ENCODE measurements at regions of chr13 and their contacts with region 1.

Region 1: GRCh38 chr13:31044377-31045285 is 112.2 kb downstream of the TEX26 start:
- DNase-seq: peak; percentile 70 to 73
- ATAC-seq: peak; percentile 73 to 92 (median 88)
- H3K4me3 ChIP-seq: no peak overlapping the region
- H3K27ac ChIP-seq: peak overlapping the region in 1 of 10 donors; percentile 79
- H3K4me1 ChIP-seq: peaks cover 3 to 34% (median 19%) of the 10 kb centered on the region in 9 donors
- H3K27me3 ChIP-seq: peaks cover 0 to 11% (median 0%) of the 10 kb centered on the region in 7 donors
- CTCF ChIP-seq: peak; percentile 88 to 98 (median 94)

Region 2: GRCh38 chr13:30673669-30674521 is 370.7 kb before region 1 on chr13:
- intact Hi-C with region 1: loop called in 3 of 10 experiments (anchors 1 to 10 kb)
- DNase-seq: peak; percentile 86 to 90
- ATAC-seq: peak; percentile 93 to 97 (median 96)
- H3K4me3 ChIP-seq: peak overlapping the region in 9 of 10 donors; percentile 33 to 67 (median 59)
- H3K27ac ChIP-seq: peak overlapping the region; percentile 49 to 84 (median 76)
- H3K4me1 ChIP-seq: peaks cover 0 to 11% (median 7%) of the 10 kb centered on the region in 9 donors
- H3K27me3 ChIP-seq: no peaks in the 10 kb centered on the region
- CTCF ChIP-seq: peak; percentile 63 to 93 (median 81)

Region 3: DNA sequence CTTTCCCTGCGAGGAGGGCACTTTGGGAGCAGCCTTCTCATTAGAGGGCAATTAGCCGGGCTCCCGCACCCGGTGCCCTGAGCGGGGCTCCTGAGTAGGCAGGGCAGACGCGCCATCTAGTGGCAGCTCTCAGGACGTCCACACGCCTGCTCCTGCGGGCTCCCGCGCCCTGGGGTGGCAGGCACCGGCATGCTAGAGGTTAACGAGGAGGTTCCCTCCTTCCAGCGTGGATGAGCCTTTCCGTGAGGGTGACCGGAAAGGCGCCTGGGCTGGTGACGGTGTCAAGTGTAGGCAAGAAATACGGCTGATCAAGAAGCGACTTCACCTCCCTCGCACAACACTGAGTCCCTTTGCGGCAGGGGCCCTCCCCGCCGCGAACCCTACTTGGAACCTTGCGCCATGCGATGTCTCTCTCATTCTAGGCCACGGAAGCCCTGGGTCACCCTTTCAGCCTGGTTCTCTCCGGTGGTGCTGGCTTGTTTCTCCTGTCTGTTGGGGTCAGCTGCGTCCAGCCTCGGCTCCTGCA is 241.6 kb before region 1 on chr13:
- intact Hi-C with region 1: loop called in 4 of 10 experiments (anchors 2 to 10 kb)
- DNase-seq: peak; percentile 82 to 88
- ATAC-seq: peak; percentile 95 to 98 (median 96)
- H3K4me3 ChIP-seq: peak overlapping the region in 9 of 10 donors; percentile 26 to 57 (median 50)
- H3K27ac ChIP-seq: peak overlapping the region in 5 of 10 donors; percentile 10 to 61 (median 40)
- H3K4me1 ChIP-seq: peaks cover 0 to 28% (median 23%) of the 10 kb centered on the region in 9 donors
- H3K27me3 ChIP-seq: no peaks in the 10 kb centered on the region
- CTCF ChIP-seq: peak; percentile 86 to 99 (median 97)

Region 4: GRCh38 chr13:30892966-30893365 is 151.7 kb before region 1 on chr13:
- intact Hi-C with region 1: loop called in 1 of 10 experiments (anchors 10 kb)
- DNase-seq: peak in 1 of 2 donors; percentile 57
- ATAC-seq: peak in 6 of 8 donors; percentile 20 to 86 (median 36)
- H3K4me3 ChIP-seq: no peak overlapping the region
- H3K27ac ChIP-seq: no peak overlapping the region
- H3K4me1 ChIP-seq: peaks cover 0 to 14% (median 0%) of the 10 kb centered on the region in 9 donors
- H3K27me3 ChIP-seq: peaks cover 0 to 3% (median 0%) of the 10 kb centered on the region in 7 donors
- CTCF ChIP-seq: peak in 6 of 9 donors; percentile 31 to 49 (median 35)

Measured in heart right ventricle (tissue), 16 donors.